Activated naive CD4-positive, alpha-beta T cell treated with anti-CD3 and anti-CD28 coated beads for 36 hours (primary cell): ENCODE measurements at regions of chr19 and their contacts with region 1.

Region 1: DNA sequence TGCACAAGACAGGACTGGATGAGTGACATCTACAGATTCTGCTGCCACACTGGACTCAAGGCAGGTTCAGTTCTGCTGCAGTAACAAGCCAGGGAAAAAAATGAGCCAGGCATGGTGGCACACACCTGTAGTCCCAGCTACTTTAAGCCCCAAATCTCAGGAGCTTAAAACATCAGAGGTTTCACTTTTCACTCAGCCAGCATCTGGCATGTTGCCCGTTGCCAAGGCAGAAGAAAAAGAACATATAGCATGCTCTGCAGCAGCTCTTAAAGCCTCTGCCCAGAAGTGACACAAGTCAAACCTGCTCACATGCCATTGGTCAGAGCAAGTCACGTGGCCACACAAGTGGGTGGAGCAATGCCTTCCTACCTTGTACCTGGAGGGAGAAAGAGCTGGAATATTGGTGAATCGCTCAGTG is 14.7 kb upstream of the ADGRE5 start:
- DNase-seq: peak; percentile 99
- H3K4me3 Mint-ChIP-seq: peak overlapping the region; percentile 75
- H3K27ac Mint-ChIP-seq: peak overlapping the region; percentile 100
- H3K4me1 Mint-ChIP-seq: peaks cover 78% of the 10 kb centered on the region
- H3K27me3 Mint-ChIP-seq: no peaks in the 10 kb centered on the region

Region 2: DNA sequence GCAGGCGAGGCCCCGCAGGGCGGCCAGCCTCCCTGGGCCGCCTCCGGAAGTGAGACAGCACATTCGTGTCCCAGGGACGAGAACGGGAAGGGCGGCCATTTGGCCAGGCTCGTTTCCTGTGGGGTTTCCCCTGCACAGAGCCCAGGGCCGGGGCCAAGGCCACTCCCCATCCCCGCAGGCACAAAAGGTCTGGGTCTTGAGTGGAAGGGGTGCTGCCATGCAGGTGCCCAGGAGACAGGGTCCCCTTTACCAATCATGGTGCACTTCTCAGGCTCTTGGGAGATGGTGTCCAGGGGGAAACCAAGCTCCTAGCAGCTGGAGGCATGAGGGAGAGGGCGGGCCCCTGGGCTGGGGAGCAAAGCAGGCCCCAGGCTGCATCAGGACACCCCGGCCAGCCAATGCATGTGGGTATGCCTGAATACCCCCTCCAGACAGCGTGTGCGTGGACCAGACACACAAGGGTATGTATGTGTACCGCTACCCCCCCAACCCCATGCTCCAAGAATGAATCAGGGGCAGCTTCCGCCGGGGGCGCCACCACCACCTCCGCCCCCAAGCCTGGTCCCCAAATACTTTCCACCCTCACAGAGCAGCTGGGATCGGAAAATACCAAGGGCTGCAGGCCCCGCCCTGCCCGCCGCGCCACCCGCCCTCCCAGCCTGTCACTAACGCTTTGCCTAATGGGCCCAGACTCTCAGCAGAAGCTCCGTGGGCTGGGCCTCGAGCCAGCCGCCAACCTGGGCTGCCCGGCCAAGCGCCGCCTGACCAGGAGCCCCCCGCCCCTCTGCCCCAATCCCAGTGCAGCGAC is 527.2 kb before region 1 on chr19:
- CTCF ChIA-PET with region 1: no interaction called
- intact Hi-C with region 1: loop called (anchors 5 kb)
- DNase-seq: peak; percentile 95
- H3K4me3 Mint-ChIP-seq: peak overlapping the region; percentile 93
- H3K27ac Mint-ChIP-seq: peak overlapping the region; percentile 99
- H3K4me1 Mint-ChIP-seq: peaks cover 47% of the 10 kb centered on the region
- H3K27me3 Mint-ChIP-seq: no peaks in the 10 kb centered on the region

Region 3: GRCh38 chr19:14006243-14006765 is 360.2 kb before region 1 on chr19 and contains the start of gene RFX1:
- CTCF ChIA-PET with region 1: no interaction called
- intact Hi-C with region 1: loop called (anchors 5 kb)
- DNase-seq: peak; percentile 100
- H3K4me3 Mint-ChIP-seq: peak within 1 kb of the TSS; percentile 90
- H3K27ac Mint-ChIP-seq: peak within 1 kb of the TSS; percentile 96
- H3K4me1 Mint-ChIP-seq: peaks cover 39% of the 10 kb centered on the region
- H3K27me3 Mint-ChIP-seq: no peaks in the 10 kb centered on the region
- total RNA-seq, gene RFX1: 13.8 to 14.0 TPM

Region 4: GRCh38 chr19:14400951-14401431 is 34.5 kb after region 1 on chr19:
- CTCF ChIA-PET with region 1: interaction called, 100 read pairs
- intact Hi-C with region 1: loop called (anchors 1 kb)
- DNase-seq: peak; percentile 54
- H3K4me3 Mint-ChIP-seq: no peak overlapping the region
- H3K27ac Mint-ChIP-seq: peak overlapping the region; percentile 90
- H3K4me1 Mint-ChIP-seq: peaks cover 35% of the 10 kb centered on the region
- H3K27me3 Mint-ChIP-seq: no peaks in the 10 kb centered on the region

Region 5: DNA sequence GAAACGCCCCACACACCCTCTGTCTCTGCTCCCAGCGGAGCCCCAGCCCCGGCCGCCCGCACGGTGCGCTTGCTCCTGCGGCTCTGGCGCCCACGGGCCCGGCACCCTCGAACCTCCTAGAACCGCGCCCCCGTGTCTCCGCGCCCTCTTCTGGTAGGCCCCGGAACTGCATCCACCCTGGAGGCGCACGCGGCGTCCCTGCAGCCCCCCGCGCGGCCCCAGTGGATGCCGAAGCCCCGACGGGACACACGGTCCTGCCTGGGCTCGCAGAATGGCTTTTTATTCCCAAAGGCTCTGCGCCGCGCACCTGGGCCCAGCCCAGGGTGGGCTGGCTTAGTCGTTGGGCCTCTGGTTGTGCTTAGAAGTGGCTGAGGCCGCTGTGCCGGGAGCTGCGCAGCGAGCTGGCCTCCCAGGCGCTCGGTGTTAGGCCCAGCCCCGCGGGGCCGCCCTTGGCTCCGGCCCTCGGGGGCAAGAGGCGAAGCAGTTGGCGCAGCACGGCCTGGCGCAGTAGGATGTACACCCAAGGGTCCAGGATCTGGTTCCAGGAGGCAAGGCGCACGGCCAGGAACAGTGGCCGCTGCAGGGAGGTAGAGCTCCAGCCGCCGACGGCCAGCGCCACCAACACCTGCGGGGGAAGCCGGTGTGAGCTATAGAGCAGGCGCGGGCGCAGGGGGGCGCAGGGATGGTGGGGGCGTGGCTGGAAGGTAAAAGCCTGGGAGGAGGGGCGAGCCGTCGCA is 105.9 kb after region 1 on chr19:
- CTCF ChIA-PET with region 1: interaction called, 10 read pairs
- intact Hi-C with region 1: loop called (anchors 2 kb)
- DNase-seq: peak; percentile 83
- H3K4me3 Mint-ChIP-seq: no peak overlapping the region
- H3K27ac Mint-ChIP-seq: no peak overlapping the region
- H3K4me1 Mint-ChIP-seq: peaks cover 31% of the 10 kb centered on the region
- H3K27me3 Mint-ChIP-seq: peaks cover 19% of the 10 kb centered on the region

Region 6: GRCh38 chr19:15238471-15239051 is 872.1 kb after region 1 on chr19:
- CTCF ChIA-PET with region 1: no interaction called
- intact Hi-C with region 1: no loop called
- DNase-seq: no peak
- H3K4me3 Mint-ChIP-seq: no peak overlapping the region
- H3K27ac Mint-ChIP-seq: no peak overlapping the region
- H3K4me1 Mint-ChIP-seq: no peaks in the 10 kb centered on the region
- H3K27me3 Mint-ChIP-seq: peaks cover 6% of the 10 kb centered on the region

Region 7: GRCh38 chr19:16076154-16076957 is 1709.8 kb after region 1 on chr19 and contains the start of gene TPM4:
- CTCF ChIA-PET with region 1: no interaction called
- intact Hi-C with region 1: loop called (anchors 10 kb)
- DNase-seq: peak; percentile 93
- H3K4me3 Mint-ChIP-seq: peak within 1 kb of the TSS; percentile 81
- H3K27ac Mint-ChIP-seq: peak within 1 kb of the TSS; percentile 98
- H3K4me1 Mint-ChIP-seq: peaks cover 65% of the 10 kb centered on the region
- H3K27me3 Mint-ChIP-seq: no peaks in the 10 kb centered on the region
- total RNA-seq, gene TPM4: 240 to 254 TPM